CD8-positive, alpha-beta memory T cell (primary cell): ENCODE measurements at regions of chr19 and their contacts with region 1.

Region 1: GRCh38 chr19:11924886-11925650 is at the start of gene ZNF700:
- DNase-seq: peak; percentile 86 to 94 (median 90)
- H3K4me3 ChIP-seq: peak within 1 kb of the TSS; percentile 93
- H3K4me3 Mint-ChIP-seq: peak within 1 kb of the TSS; percentile 93 to 99 (median 97)
- H3K27ac ChIP-seq: peak within 1 kb of the TSS; percentile 87
- H3K27ac Mint-ChIP-seq: peak within 1 kb of the TSS; percentile 96 to 99 (median 98)
- H3K4me1 ChIP-seq: peaks cover 17% of the 10 kb centered on the region
- H3K4me1 Mint-ChIP-seq: peaks cover 45 to 55% (median 47%) of the 10 kb centered on the region in 3 donors
- H3K27me3 ChIP-seq: no peaks in the 10 kb centered on the region
- H3K27me3 Mint-ChIP-seq: peaks cover 0 to 2% of the 10 kb centered on the region in 2 donors
- total RNA-seq, gene ZNF700: 10.1 to 10.8 TPM

Region 2: DNA sequence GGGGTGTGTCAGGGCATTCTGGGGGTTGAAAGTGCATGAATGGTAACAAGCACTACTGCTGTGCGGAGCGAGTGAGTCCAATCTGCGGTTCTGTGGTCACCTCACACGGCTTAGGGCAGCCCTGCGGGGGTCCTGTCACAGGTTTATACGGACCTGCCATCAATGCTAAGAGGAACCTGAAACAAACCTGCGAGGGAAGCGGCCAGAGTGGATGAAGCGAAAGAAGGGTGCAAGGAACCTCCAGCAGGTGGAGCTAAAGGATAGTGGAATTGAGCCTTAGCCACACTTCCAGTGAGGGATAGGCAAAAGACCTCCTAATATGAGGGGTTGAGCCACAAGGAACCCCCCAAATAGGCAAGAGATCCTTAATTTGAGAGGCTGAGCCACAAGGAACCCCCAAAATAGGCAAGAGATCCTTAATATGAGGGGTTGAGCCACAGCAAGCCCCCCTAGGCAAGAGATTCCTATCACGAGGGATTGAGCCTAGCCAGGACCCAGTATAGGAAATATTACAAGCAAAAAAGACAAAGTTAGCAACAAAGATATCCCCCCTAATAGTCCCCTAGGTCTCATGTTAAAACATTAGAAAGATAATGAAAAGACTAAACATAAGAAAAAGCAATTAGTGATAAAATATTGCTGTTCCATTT is 43.8 kb before region 1 on chr19:
- CTCF ChIA-PET with region 1: interaction called, 12 read pairs
- POLR2A ChIA-PET with region 1: interaction called, 3 read pairs
- DNase-seq: peak; percentile 29 to 69 (median 45)
- H3K4me3 ChIP-seq: no peak overlapping the region
- H3K4me3 Mint-ChIP-seq: peak overlapping the region in 1 of 7 donors; percentile 42
- H3K27ac ChIP-seq: no peak overlapping the region
- H3K27ac Mint-ChIP-seq: peak overlapping the region in 1 of 8 donors; percentile 5
- H3K4me1 ChIP-seq: no peaks in the 10 kb centered on the region
- H3K4me1 Mint-ChIP-seq: peaks cover 0 to 2% (median 2%) of the 10 kb centered on the region in 3 donors
- H3K27me3 ChIP-seq: no peaks in the 10 kb centered on the region
- H3K27me3 Mint-ChIP-seq: peaks cover 0 to 4% of the 10 kb centered on the region in 2 donors

Region 3: DNA sequence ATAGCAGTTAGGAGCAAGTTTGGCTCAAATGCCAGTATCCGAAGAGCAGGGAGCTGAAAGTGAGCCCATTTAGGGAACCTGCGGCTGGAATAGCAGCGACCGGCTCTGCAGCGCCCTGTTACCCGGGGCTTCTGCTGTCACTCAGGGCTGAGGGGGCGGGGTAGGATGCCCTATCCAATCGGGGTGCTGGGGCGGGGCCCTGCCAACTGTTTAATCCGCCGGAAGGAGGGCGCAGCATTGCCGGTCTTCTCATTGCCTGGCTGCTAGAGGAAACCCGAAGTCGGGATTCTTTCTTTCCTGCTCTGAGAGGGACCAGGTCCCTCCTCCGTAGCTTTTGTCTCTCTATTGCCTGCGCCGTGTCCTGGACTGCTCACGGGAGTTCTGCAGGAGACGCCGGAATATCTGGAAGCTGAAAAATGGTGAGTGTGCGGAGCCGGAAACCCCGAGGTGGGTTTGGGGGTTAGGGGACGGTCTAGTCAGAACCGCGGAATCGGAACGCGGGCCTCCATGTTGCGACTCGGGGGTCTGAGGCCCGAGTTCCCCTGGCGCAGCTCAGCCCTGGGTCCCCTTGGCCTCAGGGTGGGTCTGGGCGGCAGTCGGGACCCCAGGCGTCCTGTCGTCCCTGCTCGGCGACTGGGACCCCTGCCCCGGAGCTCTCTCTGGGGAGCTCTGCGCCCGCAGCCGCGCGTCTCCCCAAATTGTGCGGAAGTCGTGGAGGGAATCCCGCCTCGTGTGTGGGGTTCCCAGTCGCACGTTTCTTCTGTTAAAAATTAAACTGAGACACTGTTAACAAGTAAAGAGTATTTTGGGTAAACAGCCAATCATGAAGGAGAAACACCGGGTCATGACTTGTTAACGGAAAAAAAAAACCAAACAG is 62.6 kb after region 1 on chr19:
- CTCF ChIA-PET with region 1: interaction called, 130 read pairs
- POLR2A ChIA-PET with region 1: interaction called, 26 read pairs
- DNase-seq: peak; percentile 82 to 93 (median 87)
- H3K4me3 ChIP-seq: peak overlapping the region; percentile 64
- H3K4me3 Mint-ChIP-seq: peak overlapping the region; percentile 91 to 99 (median 98)
- H3K27ac ChIP-seq: peak overlapping the region; percentile 52
- H3K27ac Mint-ChIP-seq: peak overlapping the region; percentile 66 to 97 (median 92)
- H3K4me1 ChIP-seq: no peaks in the 10 kb centered on the region
- H3K4me1 Mint-ChIP-seq: peaks cover 22 to 44% (median 38%) of the 10 kb centered on the region in 3 donors
- H3K27me3 ChIP-seq: no peaks in the 10 kb centered on the region
- H3K27me3 Mint-ChIP-seq: no peaks in the 10 kb centered on the region

Region 4: GRCh38 chr19:12092065-12092867 is 167.2 kb after region 1 on chr19:
- CTCF ChIA-PET with region 1: interaction called, 11 read pairs
- POLR2A ChIA-PET with region 1: no interaction called
- DNase-seq: peak; percentile 7 to 43 (median 11)
- H3K4me3 ChIP-seq: peak overlapping the region; percentile 39
- H3K4me3 Mint-ChIP-seq: peak overlapping the region; percentile 60 to 83 (median 75)
- H3K27ac ChIP-seq: peak overlapping the region; percentile 54
- H3K27ac Mint-ChIP-seq: no peak overlapping the region
- H3K4me1 ChIP-seq: no peaks in the 10 kb centered on the region
- H3K4me1 Mint-ChIP-seq: peaks cover 8 to 14% (median 10%) of the 10 kb centered on the region in 3 donors
- H3K27me3 ChIP-seq: no peaks in the 10 kb centered on the region
- H3K27me3 Mint-ChIP-seq: peaks cover 23 to 27% of the 10 kb centered on the region in 2 donors